ENCODE measurements at regions of chr5 and their contacts with region 1.

Region 1: GRCh38 chr5:129767906-129768380 is 20.0 kb downstream of the MINAR2 start:
- DNase-seq: peak; percentile 97
- H3K4me3 Mint-ChIP-seq: no peak overlapping the region
- H3K27ac Mint-ChIP-seq: no peak overlapping the region
- H3K4me1 Mint-ChIP-seq: peaks cover 5% of the 10 kb centered on the region
- H3K27me3 Mint-ChIP-seq: no peaks in the 10 kb centered on the region
- CTCF ChIP-seq: peak; percentile 99

Region 2: DNA sequence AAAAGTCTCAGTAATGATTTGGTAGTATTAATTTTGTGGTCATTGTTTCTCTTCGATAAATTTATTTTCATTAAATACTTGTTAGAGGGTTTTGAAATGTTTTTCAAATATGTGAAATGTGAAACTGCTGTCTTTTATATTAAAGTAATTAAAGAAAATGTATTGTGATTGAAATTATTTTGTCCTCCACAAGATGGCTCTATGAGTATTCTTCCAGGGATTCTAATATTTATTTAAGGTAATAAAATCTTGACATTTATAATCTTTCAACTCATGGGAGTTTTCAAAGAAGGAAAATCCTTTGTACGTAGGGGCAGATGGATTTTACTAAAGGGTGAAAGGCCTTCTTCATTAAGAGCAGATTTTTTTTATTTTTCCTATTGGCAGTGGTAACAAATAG is 654.1 kb before region 1 on chr5:
- CTCF ChIA-PET with region 1: interaction called, 22 read pairs
- POLR2A ChIA-PET with region 1: no interaction called
- intact Hi-C with region 1: no loop called
- DNase-seq: no peak
- H3K4me3 Mint-ChIP-seq: no peak overlapping the region
- H3K27ac Mint-ChIP-seq: no peak overlapping the region
- H3K4me1 Mint-ChIP-seq: no peaks in the 10 kb centered on the region
- H3K27me3 Mint-ChIP-seq: no peaks in the 10 kb centered on the region
- CTCF ChIP-seq: no peak

Region 3: DNA sequence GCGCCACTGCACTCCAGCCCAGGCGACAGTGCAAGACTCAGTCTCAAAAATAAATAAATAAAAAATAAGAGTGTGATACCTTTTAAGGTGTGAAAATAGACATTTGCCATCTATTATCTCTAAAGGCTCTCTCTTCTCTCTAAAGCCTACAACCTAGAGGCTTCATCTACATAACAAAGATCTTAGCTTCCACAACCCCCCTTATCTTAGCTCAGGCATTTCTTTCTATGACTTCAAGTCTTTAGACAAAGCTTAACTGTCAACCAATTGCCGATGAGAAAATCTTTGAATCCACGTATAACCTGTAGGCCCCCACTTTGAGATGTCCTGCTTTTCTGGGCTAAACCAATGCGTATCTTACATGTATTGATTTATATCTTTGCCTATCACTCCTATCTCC is 372.7 kb before region 1 on chr5:
- CTCF ChIA-PET with region 1: interaction called, 110 read pairs
- POLR2A ChIA-PET with region 1: interaction called, 3 read pairs
- intact Hi-C with region 1: loop called (anchors 1 kb)
- DNase-seq: no peak
- H3K4me3 Mint-ChIP-seq: no peak overlapping the region
- H3K27ac Mint-ChIP-seq: no peak overlapping the region
- H3K4me1 Mint-ChIP-seq: no peaks in the 10 kb centered on the region
- H3K27me3 Mint-ChIP-seq: peaks cover 82% of the 10 kb centered on the region
- CTCF ChIP-seq: no peak

Region 4: GRCh38 chr5:129664337-129664937 is 103.5 kb before region 1 on chr5:
- CTCF ChIA-PET with region 1: interaction called, 19 read pairs
- POLR2A ChIA-PET with region 1: no interaction called
- intact Hi-C with region 1: loop called (anchors 1 kb)
- DNase-seq: peak; percentile 83
- H3K4me3 Mint-ChIP-seq: no peak overlapping the region
- H3K27ac Mint-ChIP-seq: no peak overlapping the region
- H3K4me1 Mint-ChIP-seq: no peaks in the 10 kb centered on the region
- H3K27me3 Mint-ChIP-seq: no peaks in the 10 kb centered on the region
- CTCF ChIP-seq: peak; percentile 89

Region 5: DNA sequence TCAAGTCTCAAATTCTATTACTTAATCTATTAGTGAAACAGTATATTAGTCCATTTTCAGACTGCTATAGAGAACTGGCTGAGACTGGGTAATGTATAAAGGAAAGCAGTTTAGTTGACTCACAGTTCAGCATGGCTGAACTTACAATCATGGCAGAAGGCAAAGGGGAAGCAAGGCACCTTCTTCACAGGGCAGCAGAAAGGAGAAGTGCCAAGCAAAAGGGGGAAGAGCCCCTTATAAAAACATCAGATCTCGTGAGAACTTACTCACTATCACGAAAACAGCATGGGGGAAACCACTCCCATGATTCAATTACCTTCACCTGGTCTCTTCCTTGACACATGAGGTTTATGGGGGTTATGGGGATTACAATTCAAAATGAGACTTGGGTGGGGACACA is 68.4 kb after region 1 on chr5:
- CTCF ChIA-PET with region 1: interaction called, 931 read pairs
- POLR2A ChIA-PET with region 1: no interaction called
- intact Hi-C with region 1: no loop called
- DNase-seq: no peak
- H3K4me3 Mint-ChIP-seq: no peak overlapping the region
- H3K27ac Mint-ChIP-seq: no peak overlapping the region
- H3K4me1 Mint-ChIP-seq: no peaks in the 10 kb centered on the region
- H3K27me3 Mint-ChIP-seq: peaks cover 60% of the 10 kb centered on the region
- CTCF ChIP-seq: no peak

Region 6: GRCh38 chr5:131109540-131110255 is 1341.8 kb after region 1 on chr5:
- CTCF ChIA-PET with region 1: interaction called, 43 read pairs
- POLR2A ChIA-PET with region 1: no interaction called
- intact Hi-C with region 1: loop called (anchors 1 kb)
- DNase-seq: peak; percentile 74
- H3K4me3 Mint-ChIP-seq: no peak overlapping the region
- H3K27ac Mint-ChIP-seq: no peak overlapping the region
- H3K4me1 Mint-ChIP-seq: peaks cover 5% of the 10 kb centered on the region
- H3K27me3 Mint-ChIP-seq: no peaks in the 10 kb centered on the region
- CTCF ChIP-seq: peak; percentile 89